ENCODE measurements at regions of chr15 and their contacts with region 1.

Region 1: GRCh38 chr15:31128919-31129768 is 27.6 kb upstream of the TRPM1 start:
- DNase-seq: peak; percentile 20
- H3K4me3 ChIP-seq: no peak overlapping the region
- H3K27ac ChIP-seq: no peak overlapping the region
- H3K27me3 ChIP-seq: peaks cover 5% of the 10 kb centered on the region
- CTCF ChIP-seq: peak; percentile 99

Region 2: DNA sequence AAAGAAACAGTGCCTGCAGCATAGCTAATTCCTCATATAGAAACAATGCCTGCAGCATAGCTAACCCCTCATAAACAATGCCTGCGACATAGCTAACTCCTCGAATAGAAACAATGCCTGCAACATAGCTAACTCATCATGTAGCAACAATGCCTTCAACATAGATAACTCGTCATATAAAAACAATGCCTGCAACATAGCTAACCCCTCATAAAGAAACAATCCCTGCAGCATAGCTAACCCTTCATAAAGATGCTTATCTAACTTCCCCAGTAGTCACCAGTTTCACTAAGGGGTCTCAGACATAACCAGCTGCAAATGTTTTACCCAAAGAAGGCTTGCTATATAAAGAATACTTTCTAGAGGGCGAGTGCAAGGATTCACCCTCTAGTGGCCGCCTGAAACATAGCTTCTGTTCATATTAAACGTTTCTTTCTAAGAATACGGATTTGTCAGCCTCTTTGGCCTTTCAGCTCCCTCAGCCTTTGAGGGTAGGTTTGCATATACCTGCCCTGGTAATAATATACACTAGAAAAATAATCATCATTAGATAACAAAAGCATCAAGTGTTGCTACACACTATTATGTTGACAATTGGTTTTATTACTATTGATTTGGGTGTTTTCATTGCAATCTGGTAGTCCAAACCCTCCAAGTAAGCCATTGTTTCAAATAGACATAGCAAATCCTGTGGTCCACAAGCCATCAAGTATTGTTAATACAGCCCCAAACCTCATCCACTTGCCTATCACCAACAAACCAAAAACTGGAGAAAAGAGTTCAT is 269.9 kb before region 1 on chr15:
- CTCF ChIA-PET with region 1: interaction called, 19 read pairs
- POLR2A ChIA-PET with region 1: no interaction called
- DNase-seq: peak; percentile 11
- H3K4me3 ChIP-seq: no peak overlapping the region
- H3K27ac ChIP-seq: no peak overlapping the region
- H3K27me3 ChIP-seq: no peaks in the 10 kb centered on the region
- CTCF ChIP-seq: peak; percentile 82

Region 3: DNA sequence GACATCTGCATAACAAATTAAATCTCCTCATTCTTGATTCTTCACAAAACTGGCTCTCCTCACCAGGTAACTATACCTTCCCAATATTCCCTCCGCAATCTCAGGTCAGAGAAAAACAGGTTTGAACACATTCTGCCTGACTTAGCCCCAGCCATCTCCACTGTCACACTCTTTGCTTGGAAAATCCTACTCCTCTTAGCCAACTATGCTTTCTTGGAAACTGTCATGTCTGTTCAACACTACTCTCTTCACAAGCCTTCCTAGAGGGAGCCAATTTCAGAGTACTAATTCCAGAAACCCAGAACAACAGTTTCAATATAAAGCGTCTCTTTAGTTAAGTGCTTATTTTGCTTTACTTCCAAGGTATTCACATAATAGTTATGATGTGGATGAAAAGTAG is 159.4 kb before region 1 on chr15:
- CTCF ChIA-PET with region 1: interaction called, 18 read pairs
- POLR2A ChIA-PET with region 1: no interaction called
- DNase-seq: no peak
- H3K4me3 ChIP-seq: no peak overlapping the region
- H3K27ac ChIP-seq: no peak overlapping the region
- H3K27me3 ChIP-seq: no peaks in the 10 kb centered on the region
- CTCF ChIP-seq: no peak

Region 4: DNA sequence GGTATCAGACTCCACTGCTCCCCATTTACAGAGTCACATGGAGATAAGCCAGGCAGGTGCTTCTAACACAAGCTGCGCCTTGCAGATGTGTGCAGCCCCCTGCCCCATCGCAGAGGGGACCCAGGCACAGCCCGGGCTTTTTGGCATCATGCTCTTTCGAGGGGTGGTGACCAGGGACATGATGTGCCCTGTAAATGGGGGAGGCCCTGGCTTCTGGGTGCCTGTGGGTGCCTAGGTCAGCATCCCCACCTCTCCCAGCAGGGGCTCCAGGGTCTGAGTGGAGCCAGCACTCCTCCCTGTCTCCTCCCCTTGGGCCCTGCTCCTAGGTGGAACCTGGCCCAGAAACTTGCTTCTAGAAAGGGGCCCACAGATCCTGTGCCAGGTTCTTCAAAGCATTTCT is 42.8 kb before region 1 on chr15:
- CTCF ChIA-PET with region 1: no interaction called
- POLR2A ChIA-PET with region 1: no interaction called
- DNase-seq: no peak
- H3K4me3 ChIP-seq: no peak overlapping the region
- H3K27ac ChIP-seq: no peak overlapping the region
- H3K27me3 ChIP-seq: no peaks in the 10 kb centered on the region
- CTCF ChIP-seq: no peak

Region 5: DNA sequence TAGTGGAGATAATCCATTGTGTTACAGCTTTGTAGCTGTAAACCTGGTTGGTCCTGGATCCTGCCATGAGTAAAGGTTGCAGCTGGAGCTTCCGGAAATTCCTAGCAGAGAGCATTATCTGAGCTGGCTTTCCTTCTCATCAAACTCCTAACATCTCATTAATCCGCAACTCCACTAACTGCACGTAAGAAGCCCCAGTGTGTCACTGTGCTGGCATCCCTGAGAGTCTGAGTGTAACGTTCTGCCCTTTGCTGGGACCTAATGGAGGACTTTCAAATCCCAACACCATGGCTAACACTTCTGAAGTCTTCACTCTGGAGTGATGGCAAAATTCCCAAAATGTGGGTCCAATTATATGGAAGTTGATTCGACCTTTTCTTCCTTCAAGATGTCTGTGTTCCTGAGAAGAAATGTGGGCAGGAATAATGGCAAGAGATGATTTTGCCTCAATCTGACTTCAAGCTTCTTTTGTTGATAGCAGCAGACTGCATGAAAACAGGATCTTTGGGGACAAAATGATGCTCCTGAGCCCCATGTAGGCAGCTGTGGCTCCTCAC is 18.0 kb before region 1 on chr15:
- CTCF ChIA-PET with region 1: interaction called, 16 read pairs
- POLR2A ChIA-PET with region 1: no interaction called
- DNase-seq: no peak
- H3K4me3 ChIP-seq: no peak overlapping the region
- H3K27ac ChIP-seq: no peak overlapping the region
- H3K27me3 ChIP-seq: peaks cover 3% of the 10 kb centered on the region
- CTCF ChIP-seq: no peak

Region 6: DNA sequence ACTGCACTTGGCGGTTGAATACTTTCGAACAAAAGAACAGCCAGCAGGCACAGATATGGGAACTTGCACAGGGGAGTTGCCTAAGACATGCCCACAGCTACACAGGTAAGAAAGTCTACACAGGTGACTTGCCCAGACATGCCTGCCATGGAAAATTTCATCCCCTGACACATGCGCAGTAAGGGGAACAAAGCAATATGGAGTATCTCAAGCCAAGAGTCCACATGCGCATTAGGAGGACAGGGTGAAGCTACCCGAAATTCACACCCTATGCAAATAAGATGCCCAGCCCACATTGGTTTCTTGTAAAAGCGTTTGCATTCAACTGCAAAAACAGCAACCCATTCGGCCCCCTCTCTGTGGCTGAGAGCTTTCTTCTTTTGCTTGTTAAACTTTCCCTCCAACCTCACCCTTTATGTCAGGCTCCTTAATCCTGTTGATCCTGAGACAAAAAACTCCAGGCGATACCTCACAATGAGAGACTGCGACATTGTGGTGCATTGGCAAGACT is 21.6 kb after region 1 on chr15:
- CTCF ChIA-PET with region 1: interaction called, 11 read pairs
- POLR2A ChIA-PET with region 1: interaction called, 4 read pairs
- DNase-seq: no peak
- H3K4me3 ChIP-seq: no peak overlapping the region
- H3K27ac ChIP-seq: no peak overlapping the region
- H3K27me3 ChIP-seq: peaks cover 15% of the 10 kb centered on the region
- CTCF ChIP-seq: no peak

Measured in AG04450 (cell line).